ENCODE measurements at regions of chr4 and their contacts with region 1.

Region 1: DNA sequence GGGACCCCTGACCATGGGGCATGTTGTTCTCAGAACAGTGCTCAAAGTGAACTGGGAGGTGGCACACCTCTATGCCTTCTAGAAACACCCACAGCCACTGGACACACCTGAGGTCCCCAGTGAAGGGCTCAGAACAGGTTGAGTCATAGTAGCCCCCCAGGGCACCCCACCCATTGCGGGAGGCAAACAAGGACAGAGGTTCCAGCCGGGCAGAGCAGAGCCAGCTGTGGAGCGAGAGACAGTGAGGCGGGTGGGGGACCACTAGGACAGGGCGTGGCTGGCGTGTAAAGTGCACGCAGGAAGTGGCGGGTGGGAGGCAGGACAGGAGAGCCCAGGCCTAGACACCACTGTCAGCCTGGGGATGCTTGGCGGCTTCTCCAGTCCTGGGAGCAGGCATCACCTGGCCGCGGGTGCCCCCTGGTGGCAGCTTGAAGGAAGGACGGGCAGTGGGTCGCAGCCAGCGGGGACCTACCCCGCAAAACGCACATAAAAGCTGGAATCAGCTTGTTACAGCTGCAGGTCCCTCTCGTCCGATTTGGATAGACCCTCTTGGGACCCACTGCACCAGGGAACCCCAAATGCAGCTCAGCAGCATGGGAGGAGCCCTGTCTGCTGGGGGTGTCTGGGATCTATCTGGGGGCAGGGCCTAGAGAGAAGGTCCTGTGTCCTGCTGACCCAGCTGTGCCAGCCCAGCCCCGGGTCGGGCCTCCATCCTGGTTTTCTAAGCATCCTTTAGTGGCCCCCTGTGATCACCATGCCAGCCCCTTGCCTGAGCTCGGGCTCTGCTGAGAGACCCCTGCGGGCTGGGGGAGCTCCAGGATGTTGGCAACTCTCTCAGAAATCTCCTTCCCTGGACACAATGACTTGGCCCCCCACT is 57.6 kb downstream of the WFS1 start:
- DNase-seq: peak; percentile 73 to 96 (median 88)

Region 2: GRCh38 chr4:5998333-5998936 is 328.8 kb before region 1 on chr4:
- intact Hi-C with region 1: loop called (anchors 5 kb)
- DNase-seq: peak; percentile 51 to 89 (median 75)

Region 3: GRCh38 chr4:6076391-6076790 is 250.9 kb before region 1 on chr4:
- intact Hi-C with region 1: no loop called
- DNase-seq: peak in 1 of 42 donors; percentile 21

Region 4: DNA sequence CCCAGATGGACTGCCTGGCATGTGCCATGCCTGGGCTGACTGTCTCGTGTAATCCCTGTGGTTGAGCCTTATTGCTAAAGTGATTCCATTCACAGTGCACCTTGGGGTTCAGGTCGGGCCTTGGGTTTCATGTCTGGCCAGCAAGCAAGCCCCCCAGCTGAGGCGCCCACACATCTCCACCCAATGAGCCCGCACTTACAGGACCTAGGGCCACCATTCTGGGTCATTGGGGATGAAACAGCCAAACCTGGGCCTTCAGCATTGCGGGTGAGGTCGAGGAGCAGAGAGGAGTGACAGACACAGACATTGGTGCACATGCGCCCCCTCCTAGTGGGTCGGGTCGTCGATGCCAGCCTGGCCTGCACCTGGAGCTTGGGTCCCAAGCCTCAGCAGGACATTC is 78.9 kb before region 1 on chr4:
- intact Hi-C with region 1: loop called (anchors 2 kb)
- DNase-seq: no peak